Calu3 (cell line): ENCODE measurements at regions of chr9 and their contacts with region 1.

Region 1: GRCh38 chr9:108551030-108551838 is 304.6 kb downstream of the ACTL7B start:
- DNase-seq: peak; percentile 53
- H3K4me3 Mint-ChIP-seq: peak overlapping the region; percentile 21
- H3K27ac Mint-ChIP-seq: peak overlapping the region; percentile 94
- H3K4me1 Mint-ChIP-seq: peaks cover 39% of the 10 kb centered on the region
- H3K27me3 Mint-ChIP-seq: no peaks in the 10 kb centered on the region
- CTCF ChIP-seq: no peak

Region 2: GRCh38 chr9:108412755-108413154 is 138.5 kb before region 1 on chr9:
- CTCF ChIA-PET with region 1: no interaction called
- intact Hi-C with region 1: loop called (anchors 5 kb)
- DNase-seq: peak; percentile 5
- H3K4me3 Mint-ChIP-seq: no peak overlapping the region
- H3K27ac Mint-ChIP-seq: no peak overlapping the region
- H3K4me1 Mint-ChIP-seq: no peaks in the 10 kb centered on the region
- H3K27me3 Mint-ChIP-seq: no peaks in the 10 kb centered on the region
- CTCF ChIP-seq: no peak

Region 3: GRCh38 chr9:108434036-108434435 is 117.2 kb before region 1 on chr9:
- CTCF ChIA-PET with region 1: no interaction called
- intact Hi-C with region 1: no loop called
- DNase-seq: no peak
- H3K4me3 Mint-ChIP-seq: no peak overlapping the region
- H3K27ac Mint-ChIP-seq: no peak overlapping the region
- H3K4me1 Mint-ChIP-seq: no peaks in the 10 kb centered on the region
- H3K27me3 Mint-ChIP-seq: no peaks in the 10 kb centered on the region
- CTCF ChIP-seq: no peak

Region 4: DNA sequence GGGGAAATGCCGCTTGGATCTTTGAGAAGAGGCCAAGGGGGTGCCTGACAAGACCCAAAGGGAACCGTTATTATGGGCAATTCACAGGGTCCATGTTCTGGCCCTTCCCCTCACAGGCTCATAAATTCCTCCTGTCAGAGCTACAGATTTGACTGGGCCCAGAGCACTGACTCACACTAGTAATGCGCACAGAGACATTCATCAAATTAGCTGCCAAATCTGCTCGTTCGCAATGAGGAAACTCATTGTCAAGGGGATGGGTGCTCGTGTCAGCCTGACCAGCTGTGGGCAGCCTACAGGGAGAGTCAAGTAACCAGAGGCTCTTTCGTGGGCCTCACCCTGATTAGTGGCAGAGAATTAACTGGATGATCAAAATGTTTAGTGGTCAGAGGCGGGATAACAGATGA is 72.8 kb before region 1 on chr9:
- CTCF ChIA-PET with region 1: no interaction called
- intact Hi-C with region 1: loop called (anchors 10 kb)
- DNase-seq: no peak
- H3K4me3 Mint-ChIP-seq: no peak overlapping the region
- H3K27ac Mint-ChIP-seq: no peak overlapping the region
- H3K4me1 Mint-ChIP-seq: peaks cover 9% of the 10 kb centered on the region
- H3K27me3 Mint-ChIP-seq: no peaks in the 10 kb centered on the region
- CTCF ChIP-seq: no peak